Activated CD4-positive, alpha-beta memory T cell treated with anti-CD3 and anti-CD28 coated beads for 36 hours (primary cell): ENCODE measurements at regions of chr1 and their contacts with region 1.

Region 1: GRCh38 chr1:202810615-202811295 is at the start of gene PCAT6:
- DNase-seq: peak; percentile 92
- H3K4me3 Mint-ChIP-seq: peak within 1 kb of the TSS; percentile 87
- H3K27ac Mint-ChIP-seq: peak within 1 kb of the TSS; percentile 69
- H3K4me1 Mint-ChIP-seq: peaks cover 34% of the 10 kb centered on the region
- H3K27me3 Mint-ChIP-seq: no peaks in the 10 kb centered on the region
- total RNA-seq, gene PCAT6: 0.76 to 0.77 TPM

Region 2: GRCh38 chr1:202728951-202729350 is 81.8 kb before region 1 on chr1:
- CTCF ChIA-PET with region 1: no interaction called
- POLR2A ChIA-PET with region 1: no interaction called
- intact Hi-C with region 1: no loop called
- DNase-seq: no peak
- H3K4me3 Mint-ChIP-seq: no peak overlapping the region
- H3K27ac Mint-ChIP-seq: no peak overlapping the region
- H3K4me1 Mint-ChIP-seq: no peaks in the 10 kb centered on the region
- H3K27me3 Mint-ChIP-seq: no peaks in the 10 kb centered on the region

Region 3: GRCh38 chr1:202834771-202835547 is 24.2 kb after region 1 on chr1:
- CTCF ChIA-PET with region 1: no interaction called
- POLR2A ChIA-PET with region 1: no interaction called
- intact Hi-C with region 1: loop called (anchors 1 kb)
- DNase-seq: peak; percentile 70
- H3K4me3 Mint-ChIP-seq: no peak overlapping the region
- H3K27ac Mint-ChIP-seq: peak overlapping the region; percentile 74
- H3K4me1 Mint-ChIP-seq: peaks cover 42% of the 10 kb centered on the region
- H3K27me3 Mint-ChIP-seq: no peaks in the 10 kb centered on the region

Region 4: GRCh38 chr1:202888531-202889360 is 78.0 kb after region 1 on chr1 and contains the start of gene RABIF:
- CTCF ChIA-PET with region 1: no interaction called
- POLR2A ChIA-PET with region 1: no interaction called
- intact Hi-C with region 1: loop called (anchors 1 kb)
- DNase-seq: peak; percentile 98
- H3K4me3 Mint-ChIP-seq: peak within 1 kb of the TSS; percentile 93
- H3K27ac Mint-ChIP-seq: peak within 1 kb of the TSS; percentile 98
- H3K4me1 Mint-ChIP-seq: peaks cover 22% of the 10 kb centered on the region
- H3K27me3 Mint-ChIP-seq: no peaks in the 10 kb centered on the region
- total RNA-seq, gene RABIF: 9.6 to 10.1 TPM

Region 5: DNA sequence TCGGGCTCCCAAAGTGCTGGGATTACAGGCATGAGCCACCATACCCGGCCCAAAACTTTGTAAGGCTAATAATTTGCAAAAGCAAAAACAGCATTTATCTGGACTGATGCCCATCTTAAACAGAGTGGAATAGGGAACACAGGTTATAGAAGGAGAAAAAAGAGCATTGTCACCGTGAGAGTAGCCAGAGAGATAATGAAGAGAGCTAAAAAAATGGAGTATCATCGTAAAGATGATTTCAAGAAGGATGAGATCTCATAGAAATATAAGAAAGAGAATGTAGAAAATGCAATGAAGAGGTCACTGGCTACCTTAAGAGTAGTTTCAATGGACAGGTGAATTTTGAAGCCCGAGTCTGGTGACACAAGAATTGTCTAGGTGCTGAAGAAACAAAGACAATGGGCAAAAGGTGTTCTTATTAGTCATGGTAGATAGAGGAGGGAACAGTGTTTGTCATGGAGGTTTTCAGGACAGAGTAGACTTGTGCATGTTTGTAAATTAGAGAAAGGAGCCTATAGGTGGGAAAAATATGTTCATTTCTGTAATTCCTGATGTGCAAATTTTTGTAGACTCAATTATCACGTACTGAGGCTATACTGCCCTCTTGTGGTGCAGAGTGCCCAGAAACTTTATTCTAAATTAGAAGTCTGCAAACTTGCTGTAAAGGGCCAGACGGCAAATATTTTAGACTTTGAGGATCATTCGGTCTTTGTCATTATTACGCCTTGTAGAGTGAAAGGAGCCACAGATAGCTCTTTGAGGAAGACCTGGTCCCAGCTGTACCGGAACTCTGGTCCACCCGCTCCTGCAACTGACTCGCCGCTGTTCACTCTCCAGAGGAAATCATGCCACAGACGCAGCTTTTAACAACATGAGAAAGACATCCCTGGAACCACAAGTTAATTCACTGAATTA is 188.3 kb after region 1 on chr1:
- CTCF ChIA-PET with region 1: no interaction called
- POLR2A ChIA-PET with region 1: no interaction called
- intact Hi-C with region 1: loop called (anchors 2 kb)
- DNase-seq: peak; percentile 63
- H3K4me3 Mint-ChIP-seq: peak overlapping the region; percentile 33
- H3K27ac Mint-ChIP-seq: no peak overlapping the region
- H3K4me1 Mint-ChIP-seq: peaks cover 10% of the 10 kb centered on the region
- H3K27me3 Mint-ChIP-seq: peaks cover 22% of the 10 kb centered on the region

Region 6: DNA sequence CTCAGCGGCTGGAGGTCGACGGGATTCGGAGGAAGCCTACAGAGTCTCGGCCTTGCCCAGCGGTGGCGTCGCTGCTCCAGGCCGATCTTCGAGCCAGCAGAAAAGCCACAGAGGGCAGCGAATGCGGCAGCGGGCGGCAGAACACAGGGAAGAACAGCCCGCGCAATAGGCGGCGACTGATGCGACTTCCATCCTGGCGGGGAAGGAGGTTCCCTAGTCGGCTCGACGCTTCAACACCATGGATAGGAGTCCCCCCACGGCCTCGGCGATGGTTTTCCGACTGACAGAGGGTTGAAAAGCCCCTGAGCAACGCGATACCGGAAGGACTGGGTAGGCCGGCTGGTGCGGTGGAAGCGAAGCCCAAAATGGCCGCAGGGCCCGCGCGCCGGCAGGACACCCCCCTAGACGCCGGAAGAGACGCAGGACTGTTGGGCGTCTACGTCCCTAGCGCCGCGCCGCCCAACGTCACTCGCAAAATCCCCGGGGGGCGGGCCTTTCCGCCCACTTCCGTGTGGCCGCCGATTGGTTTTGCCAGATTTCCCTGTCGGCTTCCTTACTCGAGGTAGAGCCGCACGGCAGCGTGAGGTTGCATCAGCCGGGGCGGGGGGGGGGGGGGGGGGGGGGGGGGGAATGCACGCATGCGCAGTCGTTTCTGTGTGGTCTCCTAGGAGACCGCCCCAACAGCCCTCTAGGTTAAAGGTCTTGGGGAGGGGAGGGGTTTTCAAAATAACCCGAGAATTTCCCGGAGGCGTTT is 1600.9 kb after region 1 on chr1 and contains the start of gene PPP1R15B:
- CTCF ChIA-PET with region 1: no interaction called
- POLR2A ChIA-PET with region 1: no interaction called
- intact Hi-C with region 1: loop called (anchors 5 kb)
- DNase-seq: peak; percentile 99
- H3K4me3 Mint-ChIP-seq: peak within 1 kb of the TSS; percentile 99
- H3K27ac Mint-ChIP-seq: peak within 1 kb of the TSS; percentile 98
- H3K4me1 Mint-ChIP-seq: peaks cover 12% of the 10 kb centered on the region
- H3K27me3 Mint-ChIP-seq: no peaks in the 10 kb centered on the region
- total RNA-seq, gene PPP1R15B: 54.9 to 57.1 TPM